ENCODE measurements at regions of chr16 and their contacts with region 1.

Region 1: GRCh38 chr16:21584817-21585216 is 14.6 kb upstream of the METTL9 start:
- DNase-seq: no peak
- ATAC-seq: no peak
- H3K4me3 ChIP-seq: no peak overlapping the region
- H3K27ac ChIP-seq: no peak overlapping the region
- H3K4me1 ChIP-seq: no peaks in the 10 kb centered on the region
- H3K27me3 ChIP-seq: no peaks in the 10 kb centered on the region
- CTCF ChIP-seq: no peak

Region 2: DNA sequence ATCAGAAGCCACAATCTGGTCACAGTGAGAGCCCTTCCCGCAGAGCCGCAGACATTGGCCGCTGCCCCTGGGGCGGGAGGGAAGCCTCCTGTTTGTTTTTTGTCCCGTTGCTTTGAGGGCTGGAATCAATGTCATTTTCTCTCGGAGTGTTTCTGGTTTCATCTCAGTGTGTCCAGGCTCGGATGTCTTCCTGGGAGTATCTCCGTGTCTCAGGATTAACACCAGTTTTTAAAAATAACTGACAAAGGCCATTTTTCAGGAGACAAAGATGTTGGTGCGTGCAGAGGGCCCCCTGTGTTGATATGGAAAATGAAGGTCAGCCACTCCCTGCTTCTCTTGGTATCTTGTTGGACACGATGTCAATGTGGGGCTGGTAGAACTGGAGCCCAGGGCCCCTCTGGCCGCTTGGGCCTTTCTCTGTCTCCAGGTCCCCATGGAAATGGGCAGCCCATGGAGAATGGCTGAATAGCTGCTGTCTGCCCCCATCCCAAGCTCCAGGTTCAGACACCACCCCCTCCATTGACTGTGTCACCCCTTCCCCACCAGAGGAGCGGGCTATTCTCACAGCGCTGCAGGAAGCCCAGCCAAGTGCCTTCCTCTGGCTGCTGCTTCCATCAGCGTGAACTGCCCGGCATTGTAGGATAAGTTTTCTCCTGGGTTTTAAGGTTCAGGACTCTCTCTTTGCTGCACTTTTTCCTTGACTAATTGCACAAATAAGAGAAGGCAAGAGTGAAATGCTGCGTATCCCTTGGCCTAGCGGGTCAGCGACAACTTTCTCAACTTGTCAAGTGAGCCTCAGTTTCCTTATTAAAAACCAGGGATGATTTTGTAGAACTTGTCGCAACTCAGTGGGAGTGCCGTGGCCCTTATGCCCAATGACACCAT is 57.7 kb before region 1 on chr16:
- intact Hi-C with region 1: no loop called
- DNase-seq: peak in 1 of 2 donors; percentile 31
- ATAC-seq: no peak
- H3K4me3 ChIP-seq: no peak overlapping the region
- H3K27ac ChIP-seq: no peak overlapping the region
- H3K4me1 ChIP-seq: no peaks in the 10 kb centered on the region
- H3K27me3 ChIP-seq: no peaks in the 10 kb centered on the region
- CTCF ChIP-seq: no peak

Region 3: DNA sequence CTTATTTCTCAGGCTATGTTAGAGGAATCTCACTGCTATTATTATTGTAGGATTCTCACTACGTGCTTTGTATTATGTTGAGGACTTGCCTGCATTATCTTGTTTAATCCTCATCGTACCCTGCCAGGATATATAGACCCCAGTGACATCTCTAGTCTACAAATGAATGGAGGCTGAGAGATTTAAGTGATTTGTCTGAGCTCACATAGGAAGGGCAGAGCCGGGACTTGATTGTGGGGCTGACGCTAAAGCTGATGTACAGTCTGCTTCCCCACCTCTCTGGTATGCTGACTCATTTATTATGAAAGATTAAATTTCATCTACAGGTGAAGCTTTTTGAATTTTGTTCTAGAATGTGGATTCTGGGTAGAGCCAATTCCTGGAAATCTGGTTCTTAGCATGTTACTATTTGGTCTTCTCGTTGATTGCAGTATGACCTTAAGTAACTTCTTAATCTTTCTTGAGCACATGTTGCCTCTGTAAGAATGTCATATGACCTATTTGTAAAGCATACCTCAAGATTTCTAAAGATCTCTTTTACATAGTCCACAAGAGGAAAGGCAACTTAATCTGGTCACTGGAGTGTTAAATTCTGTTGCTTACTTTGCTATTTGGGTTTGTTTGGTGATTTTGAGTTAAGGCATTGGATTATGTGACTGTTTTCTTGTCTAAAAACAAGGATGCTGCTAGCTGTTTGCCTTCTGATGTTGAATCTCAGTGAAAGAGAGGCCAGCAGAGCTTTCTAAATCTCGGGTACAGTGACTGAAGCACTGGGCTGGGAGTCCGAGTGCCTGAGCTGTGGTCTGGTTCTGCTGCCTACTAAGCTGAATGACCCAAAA is 26.9 kb after region 1 on chr16:
- intact Hi-C with region 1: loop called in 1 of 2 experiments (anchors 2 kb)
- DNase-seq: no peak
- ATAC-seq: peak; percentile 66 to 90 (median 80)
- H3K4me3 ChIP-seq: peak overlapping the region; percentile 9
- H3K27ac ChIP-seq: peak overlapping the region; percentile 74
- H3K4me1 ChIP-seq: peaks cover 48% of the 10 kb centered on the region
- H3K27me3 ChIP-seq: no peaks in the 10 kb centered on the region
- CTCF ChIP-seq: no peak

Region 4: DNA sequence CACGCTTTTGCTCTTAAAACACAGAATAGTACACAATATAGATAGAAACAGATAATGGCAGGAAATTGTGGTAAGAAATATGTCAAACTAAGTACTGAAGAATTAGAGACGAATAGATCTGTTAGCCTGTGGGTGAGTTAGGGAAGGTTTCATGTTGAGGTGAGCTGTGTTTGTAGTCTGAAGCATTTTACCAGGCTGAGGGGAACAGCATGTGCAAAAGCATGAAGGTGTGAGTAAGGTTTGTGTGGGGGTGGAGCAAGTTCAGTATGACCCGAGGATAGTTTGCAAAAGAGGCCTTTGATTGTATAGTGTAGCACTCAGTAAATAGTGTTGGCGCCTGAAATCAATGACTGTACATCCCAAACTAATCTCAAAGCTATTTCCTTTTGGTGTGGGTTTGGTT is 53.8 kb after region 1 on chr16:
- intact Hi-C with region 1: loop called in 1 of 2 experiments (anchors 2 kb)
- DNase-seq: no peak
- ATAC-seq: no peak
- H3K4me3 ChIP-seq: no peak overlapping the region
- H3K27ac ChIP-seq: no peak overlapping the region
- H3K4me1 ChIP-seq: no peaks in the 10 kb centered on the region
- H3K27me3 ChIP-seq: no peaks in the 10 kb centered on the region
- CTCF ChIP-seq: no peak

Region 5: DNA sequence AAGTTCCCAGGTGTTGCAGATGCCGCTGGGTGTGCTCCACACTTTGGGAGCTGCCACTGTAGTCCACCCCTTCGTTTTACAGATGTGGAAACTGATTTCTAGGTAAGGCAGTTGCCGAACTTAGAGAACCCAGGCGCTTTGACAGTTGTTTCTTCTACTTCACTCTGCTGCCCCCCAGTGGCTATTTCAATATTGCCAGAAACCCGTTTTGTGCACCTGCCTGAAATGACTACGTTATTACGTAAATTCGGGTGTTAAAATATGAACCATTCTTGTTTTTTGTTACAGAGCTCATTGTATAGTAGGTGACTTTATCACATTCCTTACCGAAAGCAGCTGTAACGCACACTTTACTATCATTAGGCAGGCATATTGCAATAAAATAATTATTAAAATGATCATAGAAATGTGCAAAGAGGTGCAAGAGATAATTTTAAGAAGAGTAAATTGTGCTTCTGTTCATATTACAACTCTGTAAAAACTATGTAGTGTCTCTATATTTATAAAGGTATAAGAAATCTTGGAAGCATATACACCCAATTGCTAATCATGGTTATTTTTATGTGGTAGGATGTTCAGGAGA is 123.8 kb after region 1 on chr16:
- intact Hi-C with region 1: loop called (anchors 2 to 5 kb)
- DNase-seq: peak; percentile 41 to 56
- ATAC-seq: peak; percentile 43 to 76 (median 58)
- H3K4me3 ChIP-seq: no peak overlapping the region
- H3K27ac ChIP-seq: no peak overlapping the region
- H3K4me1 ChIP-seq: no peaks in the 10 kb centered on the region
- H3K27me3 ChIP-seq: no peaks in the 10 kb centered on the region
- CTCF ChIP-seq: peak; percentile 82

Region 6: GRCh38 chr16:21713549-21714368 is 128.9 kb after region 1 on chr16:
- intact Hi-C with region 1: loop called (anchors 2 to 5 kb)
- DNase-seq: no peak
- ATAC-seq: no peak
- H3K4me3 ChIP-seq: no peak overlapping the region
- H3K27ac ChIP-seq: no peak overlapping the region
- H3K4me1 ChIP-seq: no peaks in the 10 kb centered on the region
- H3K27me3 ChIP-seq: no peaks in the 10 kb centered on the region
- CTCF ChIP-seq: no peak

Measured in psoas muscle (tissue), 8 donors.